ENCODE measurements at regions of chr3 and their contacts with region 1.

Region 1: GRCh38 chr3:100400780-100401673 is at the starts of genes LNP1 and TOMM70:
- DNase-seq: peak; percentile 96
- ATAC-seq: peak; percentile 92
- H3K4me3 ChIP-seq: peak within 1 kb of the TSS; percentile 74 to 95 (median 89)
- H3K4me3 Mint-ChIP-seq: peak within 1 kb of the TSS; percentile 95
- H3K27ac ChIP-seq: peak within 1 kb of the TSS; percentile 73 to 84
- H3K27ac Mint-ChIP-seq: peak within 1 kb of the TSS; percentile 93
- H3K4me1 ChIP-seq: peaks cover 18 to 22% of the 10 kb centered on the region in 2 donors
- H3K4me1 Mint-ChIP-seq: peaks cover 49% of the 10 kb centered on the region
- H3K27me3 ChIP-seq: no peaks in the 10 kb centered on the region
- H3K27me3 Mint-ChIP-seq: no peaks in the 10 kb centered on the region
- CTCF ChIP-seq: no peak
- total RNA-seq, gene LNP1: 1.6 and 1.9 TPM in 2 replicates
- total RNA-seq, gene TOMM70: 28.8 and 30.0 TPM in 2 replicates

Region 2: DNA sequence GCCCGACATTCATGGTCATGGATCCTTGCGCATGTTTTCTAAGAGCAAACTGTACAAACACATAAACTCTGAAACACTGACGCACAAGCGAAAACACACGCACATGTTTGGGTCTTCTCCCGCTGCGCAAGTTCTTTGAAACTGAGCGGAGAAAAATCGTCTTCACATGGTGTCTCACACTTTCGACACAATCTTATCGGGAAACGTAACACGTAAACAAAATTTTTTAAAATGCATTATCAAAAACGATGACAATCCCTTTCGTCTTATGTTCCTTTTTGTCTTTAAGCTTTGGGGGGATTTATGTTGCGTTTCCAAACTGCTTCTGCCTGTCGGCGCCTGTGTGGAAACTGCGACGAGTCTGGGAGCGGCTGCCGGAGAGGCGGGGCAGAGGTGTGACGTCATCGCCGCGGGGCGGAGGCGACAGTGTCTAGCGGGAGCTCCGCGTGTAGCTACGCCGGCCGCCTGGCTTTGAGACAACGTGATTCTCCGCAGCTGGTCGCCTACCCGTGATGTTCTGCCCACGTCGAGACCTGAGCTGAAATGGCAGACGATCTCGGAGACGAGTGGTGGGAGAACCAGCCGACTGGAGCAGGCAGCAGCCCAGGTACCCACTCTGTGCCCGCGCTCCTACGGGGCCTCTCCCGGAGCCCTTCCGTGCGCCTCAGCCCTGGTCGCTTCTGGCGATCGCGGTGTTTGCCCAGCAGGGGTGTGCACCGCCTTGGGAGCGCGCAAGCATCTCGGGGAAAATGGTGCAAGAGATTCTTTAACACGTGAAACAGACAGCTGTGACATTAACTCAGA is 583.4 kb before region 1 on chr3 and contains the start of gene CMSS1:
- CTCF ChIA-PET with region 1: interaction called, 3 read pairs
- POLR2A ChIA-PET with region 1: no interaction called
- intact Hi-C with region 1: loop called (anchors 1 kb)
- DNase-seq: peak; percentile 98
- ATAC-seq: peak; percentile 91
- H3K4me3 ChIP-seq: peak within 1 kb of the TSS; percentile 71 to 99 (median 89)
- H3K4me3 Mint-ChIP-seq: peak within 1 kb of the TSS; percentile 99
- H3K27ac ChIP-seq: peak within 1 kb of the TSS; percentile 85 to 91
- H3K27ac Mint-ChIP-seq: peak within 1 kb of the TSS; percentile 100
- H3K4me1 ChIP-seq: peaks cover 16 to 17% of the 10 kb centered on the region in 2 donors
- H3K4me1 Mint-ChIP-seq: peaks cover 39% of the 10 kb centered on the region
- H3K27me3 ChIP-seq: no peaks in the 10 kb centered on the region
- H3K27me3 Mint-ChIP-seq: no peaks in the 10 kb centered on the region
- CTCF ChIP-seq: no peak
- total RNA-seq, gene CMSS1: 22.0 and 22.8 TPM in 2 replicates

Region 3: DNA sequence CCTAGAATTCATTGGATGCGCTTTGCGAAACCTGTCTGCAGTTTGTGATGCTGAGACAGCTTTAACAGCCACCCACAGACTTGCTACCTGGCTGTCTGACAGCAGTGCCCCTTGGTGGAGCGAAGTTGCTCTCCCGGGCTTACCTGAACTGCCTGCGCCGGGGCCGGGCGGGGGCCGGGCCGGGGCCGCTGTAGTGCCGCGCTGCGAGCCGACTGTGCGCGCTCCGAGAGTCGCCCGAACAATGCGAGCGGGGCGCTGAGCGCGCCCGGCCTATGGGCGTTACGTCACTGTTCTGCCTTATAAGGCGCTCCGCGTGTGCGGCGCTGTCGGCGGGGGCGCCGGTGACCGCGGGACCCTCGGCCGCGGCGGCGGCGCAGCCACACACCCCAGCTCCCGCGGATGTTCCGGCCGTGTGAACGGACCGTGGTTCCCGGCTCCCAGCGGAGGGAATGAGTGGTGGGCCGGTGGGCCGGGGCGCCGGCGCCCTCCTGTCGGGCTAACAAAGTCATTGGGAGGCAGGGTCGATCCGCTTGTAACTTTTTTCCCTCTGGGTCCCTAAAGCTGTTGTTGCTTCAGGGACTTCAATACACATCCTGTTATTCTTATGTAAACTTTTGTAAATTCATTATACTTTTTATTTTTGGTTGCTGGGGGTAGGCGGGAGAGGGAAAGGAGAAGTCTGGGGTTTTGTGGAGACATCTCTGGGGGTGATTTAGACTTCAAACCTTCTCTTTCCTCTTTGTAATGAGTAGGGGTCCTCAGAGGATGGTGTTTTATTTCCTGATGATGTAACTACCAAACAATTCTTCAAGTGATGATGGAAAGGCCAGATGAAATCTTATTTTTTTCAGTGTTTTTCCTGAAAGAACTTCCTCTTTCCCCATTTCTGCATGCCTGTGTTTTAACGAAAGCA is 524.8 kb before region 1 on chr3:
- CTCF ChIA-PET with region 1: no interaction called
- POLR2A ChIA-PET with region 1: no interaction called
- intact Hi-C with region 1: loop called (anchors 1 kb)
- DNase-seq: peak; percentile 86
- ATAC-seq: peak; percentile 97
- H3K4me3 ChIP-seq: peak overlapping the region; percentile 52 to 74 (median 64)
- H3K4me3 Mint-ChIP-seq: peak overlapping the region; percentile 89
- H3K27ac ChIP-seq: peak overlapping the region; percentile 24 to 71
- H3K27ac Mint-ChIP-seq: peak overlapping the region; percentile 5
- H3K4me1 ChIP-seq: peaks cover 6 to 8% of the 10 kb centered on the region in 2 donors
- H3K4me1 Mint-ChIP-seq: peaks cover 18% of the 10 kb centered on the region
- H3K27me3 ChIP-seq: no peaks in the 10 kb centered on the region
- H3K27me3 Mint-ChIP-seq: no peaks in the 10 kb centered on the region
- CTCF ChIP-seq: no peak

Region 4: DNA sequence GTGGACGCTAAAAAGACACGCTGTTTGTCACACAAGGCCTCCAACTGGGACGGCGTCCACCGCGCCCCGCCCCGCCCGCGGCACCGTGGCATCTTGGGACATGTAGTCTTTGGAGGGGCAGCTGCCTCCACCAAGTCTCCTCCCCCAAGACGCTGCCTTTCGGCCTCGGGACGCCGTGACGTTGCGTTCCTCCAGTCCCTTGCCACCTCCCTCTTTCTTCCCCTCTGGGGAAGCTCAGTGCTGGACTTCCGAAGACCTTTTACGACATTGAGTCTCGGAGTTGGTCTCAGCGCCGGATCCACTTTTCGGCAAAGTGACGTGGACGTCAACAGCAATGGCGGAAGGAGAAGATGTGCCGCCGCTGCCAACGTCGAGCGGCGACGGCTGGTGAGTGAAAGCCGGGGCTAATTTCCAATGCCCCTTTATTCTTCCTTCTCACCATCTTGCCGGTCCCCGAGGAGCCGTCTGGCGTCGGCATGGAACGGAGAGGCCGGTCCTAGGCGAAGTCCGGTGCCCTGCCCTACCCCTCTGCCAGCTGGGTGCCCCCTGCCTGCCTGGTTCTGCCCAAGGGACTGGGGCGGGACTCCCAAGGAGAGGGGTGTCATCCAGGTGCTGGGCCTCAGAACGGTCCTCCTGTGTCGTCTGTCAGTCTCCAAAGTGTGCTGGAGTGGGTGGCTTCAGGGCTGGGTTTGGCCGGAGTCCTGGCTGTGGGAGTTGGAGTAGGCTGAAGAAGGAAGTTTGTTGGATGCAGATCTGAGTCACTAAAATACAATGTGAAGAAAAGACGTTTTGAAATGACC is 140.1 kb before region 1 on chr3 and contains the start of gene TBC1D23:
- CTCF ChIA-PET with region 1: interaction called, 4 read pairs
- POLR2A ChIA-PET with region 1: interaction called, 3 read pairs
- intact Hi-C with region 1: loop called (anchors 1 kb)
- DNase-seq: peak; percentile 98
- ATAC-seq: peak; percentile 99
- H3K4me3 ChIP-seq: peak within 1 kb of the TSS; percentile 85 to 99 (median 93)
- H3K4me3 Mint-ChIP-seq: peak within 1 kb of the TSS; percentile 91
- H3K27ac ChIP-seq: peak within 1 kb of the TSS; percentile 93 to 95
- H3K27ac Mint-ChIP-seq: peak within 1 kb of the TSS; percentile 98
- H3K4me1 ChIP-seq: peaks cover 9 to 17% of the 10 kb centered on the region in 2 donors
- H3K4me1 Mint-ChIP-seq: peaks cover 45% of the 10 kb centered on the region
- H3K27me3 ChIP-seq: no peaks in the 10 kb centered on the region
- H3K27me3 Mint-ChIP-seq: no peaks in the 10 kb centered on the region
- CTCF ChIP-seq: no peak
- total RNA-seq, gene TBC1D23: 36.5 and 48.5 TPM in 2 replicates

Region 5: DNA sequence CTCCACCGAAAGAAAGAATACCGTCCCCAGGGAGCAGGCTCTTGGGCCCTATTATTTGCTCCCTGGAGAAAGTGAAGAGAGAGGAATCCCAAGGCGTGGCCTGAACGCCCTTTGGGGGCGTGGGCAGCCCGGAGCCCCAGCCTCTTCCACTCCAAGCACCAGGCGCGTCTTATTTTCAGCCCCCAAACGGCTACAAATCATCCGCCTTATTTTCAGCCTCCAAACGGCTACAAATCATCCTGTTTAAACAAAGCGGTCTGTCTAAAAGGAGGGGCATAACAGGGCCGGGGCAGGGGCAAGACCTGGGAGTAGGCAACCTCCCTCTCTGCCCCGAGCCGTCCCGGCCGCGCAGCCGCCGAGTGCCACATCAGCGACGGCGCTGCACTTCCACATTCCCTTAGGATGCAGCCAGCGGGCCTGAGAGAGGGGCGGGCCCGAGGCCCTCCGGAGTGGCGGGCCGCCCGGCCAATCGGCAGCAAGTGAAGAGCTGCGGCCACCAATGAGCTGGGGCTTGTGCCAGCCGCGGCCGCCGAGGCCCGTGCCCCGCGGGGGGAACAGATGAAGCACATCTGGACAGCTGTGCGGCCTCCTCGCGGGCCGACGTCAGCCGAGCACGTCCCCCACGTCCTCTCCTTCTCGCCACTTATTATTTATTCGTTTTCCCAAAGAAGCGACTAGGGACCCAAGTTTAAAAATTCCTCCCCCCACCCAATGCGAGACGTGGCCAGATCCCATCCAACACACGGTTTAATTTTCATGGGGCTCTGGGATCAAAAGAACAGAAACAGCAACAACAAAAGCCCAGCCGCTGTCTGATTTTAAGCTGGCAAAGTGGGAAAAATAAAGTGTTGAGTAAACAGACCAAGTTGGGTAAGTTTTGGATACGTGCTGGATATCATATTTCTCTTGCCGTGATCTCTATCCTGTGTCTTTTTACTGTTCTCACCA is 91.3 kb after region 1 on chr3 and contains the start of gene TMEM45A:
- CTCF ChIA-PET with region 1: no interaction called
- POLR2A ChIA-PET with region 1: no interaction called
- intact Hi-C with region 1: loop called (anchors 5 kb)
- DNase-seq: peak; percentile 81
- ATAC-seq: peak; percentile 93
- H3K4me3 ChIP-seq: peak within 1 kb of the TSS; percentile 41 to 75 (median 62)
- H3K4me3 Mint-ChIP-seq: peak within 1 kb of the TSS; percentile 86
- H3K27ac ChIP-seq: no peak within 1 kb of the TSS
- H3K27ac Mint-ChIP-seq: no peak within 1 kb of the TSS
- H3K4me1 ChIP-seq: peaks cover 17 to 21% of the 10 kb centered on the region in 2 donors
- H3K4me1 Mint-ChIP-seq: peaks cover 26% of the 10 kb centered on the region
- H3K27me3 ChIP-seq: peaks cover 0 to 29% (median 5%) of the 10 kb centered on the region in 4 experiments
- H3K27me3 Mint-ChIP-seq: peaks cover 14% of the 10 kb centered on the region
- CTCF ChIP-seq: no peak
- total RNA-seq, gene TMEM45A: 0.15 and 0.20 TPM in 2 replicates

Region 6: GRCh38 chr3:100708967-100709841 is 308.2 kb after region 1 on chr3 and contains the start of gene TFG:
- CTCF ChIA-PET with region 1: no interaction called
- POLR2A ChIA-PET with region 1: no interaction called
- intact Hi-C with region 1: loop called (anchors 1 kb)
- DNase-seq: peak; percentile 99
- ATAC-seq: peak; percentile 94
- H3K4me3 ChIP-seq: peak within 1 kb of the TSS; percentile 47 to 85 (median 78)
- H3K4me3 Mint-ChIP-seq: peak within 1 kb of the TSS; percentile 92
- H3K27ac ChIP-seq: peak within 1 kb of the TSS; percentile 76 to 90
- H3K27ac Mint-ChIP-seq: peak within 1 kb of the TSS; percentile 97
- H3K4me1 ChIP-seq: peaks cover 19 to 21% of the 10 kb centered on the region in 2 donors
- H3K4me1 Mint-ChIP-seq: peaks cover 36% of the 10 kb centered on the region
- H3K27me3 ChIP-seq: peaks cover 0 to 21% (median 8%) of the 10 kb centered on the region in 4 experiments
- H3K27me3 Mint-ChIP-seq: peaks cover 22% of the 10 kb centered on the region
- CTCF ChIP-seq: no peak
- total RNA-seq, gene TFG: 44.0 and 51.6 TPM in 2 replicates

Region 7: GRCh38 chr3:101676765-101677435 is 1275.9 kb after region 1 on chr3 and contains the start of gene ZBTB11:
- CTCF ChIA-PET with region 1: no interaction called
- POLR2A ChIA-PET with region 1: no interaction called
- intact Hi-C with region 1: loop called (anchors 1 kb)
- DNase-seq: peak; percentile 99
- ATAC-seq: peak; percentile 65
- H3K4me3 ChIP-seq: peak within 1 kb of the TSS; percentile 73 to 99 (median 94)
- H3K4me3 Mint-ChIP-seq: peak within 1 kb of the TSS; percentile 94
- H3K27ac ChIP-seq: peak within 1 kb of the TSS; percentile 96 to 98
- H3K27ac Mint-ChIP-seq: peak within 1 kb of the TSS; percentile 97
- H3K4me1 ChIP-seq: peaks cover 17 to 21% of the 10 kb centered on the region in 2 donors
- H3K4me1 Mint-ChIP-seq: peaks cover 40% of the 10 kb centered on the region
- H3K27me3 ChIP-seq: no peaks in the 10 kb centered on the region
- H3K27me3 Mint-ChIP-seq: no peaks in the 10 kb centered on the region
- CTCF ChIP-seq: no peak
- total RNA-seq, gene ZBTB11: 40.7 and 42.6 TPM in 2 replicates